Breast epithelium (tissue), 4 donors: ENCODE measurements at regions of chr18 and their contacts with region 1.

Region 1: DNA sequence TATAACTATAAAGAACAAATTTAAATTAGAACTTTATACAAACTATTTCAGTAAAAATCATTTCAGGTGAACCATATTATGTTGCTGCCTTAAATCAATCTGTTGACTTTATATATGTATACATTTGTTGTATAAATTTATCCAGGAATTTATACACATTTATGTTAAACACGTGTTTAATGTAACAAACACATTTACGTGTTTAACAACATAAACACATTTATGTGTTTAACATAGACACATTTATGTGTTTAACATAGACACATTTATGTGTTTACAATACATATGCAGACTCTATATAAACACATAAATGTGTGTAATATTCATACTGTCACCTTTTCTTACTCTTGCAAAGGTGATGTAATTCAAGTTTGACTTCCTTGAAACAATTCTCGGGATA is 75.4 kb upstream of the TWSG1 start:
- DNase-seq: no peak
- H3K4me3 ChIP-seq: no peak overlapping the region
- H3K27ac ChIP-seq: no peak overlapping the region
- H3K4me1 ChIP-seq: no peaks in the 10 kb centered on the region
- H3K27me3 ChIP-seq: no peaks in the 10 kb centered on the region
- CTCF ChIP-seq: no peak
- POLR2A ChIP-seq: no peak

Region 2: GRCh38 chr18:9466846-9467245 is 207.7 kb after region 1 on chr18:
- intact Hi-C with region 1: loop called (anchors 5 kb)
- DNase-seq: no peak
- H3K4me3 ChIP-seq: no peak overlapping the region
- H3K27ac ChIP-seq: no peak overlapping the region
- H3K4me1 ChIP-seq: no peaks in the 10 kb centered on the region
- H3K27me3 ChIP-seq: no peaks in the 10 kb centered on the region
- CTCF ChIP-seq: no peak
- POLR2A ChIP-seq: no peak